Stomach (tissue), 19 donors: ENCODE measurements at regions of chr20 and their contacts with region 1.

Region 1: GRCh38 chr20:9626357-9626756 is 112.0 kb downstream of the LAMP5 start:
- DNase-seq: peak in 1 of 2 donors; percentile 64
- H3K4me3 ChIP-seq: no peak overlapping the region
- H3K27ac ChIP-seq: no peak overlapping the region
- H3K4me1 ChIP-seq: no peaks in the 10 kb centered on the region
- H3K27me3 ChIP-seq: no peaks in the 10 kb centered on the region
- CTCF ChIP-seq: no peak
- EP300 ChIP-seq: no peak
- POLR2A ChIP-seq: no peak

Region 2: DNA sequence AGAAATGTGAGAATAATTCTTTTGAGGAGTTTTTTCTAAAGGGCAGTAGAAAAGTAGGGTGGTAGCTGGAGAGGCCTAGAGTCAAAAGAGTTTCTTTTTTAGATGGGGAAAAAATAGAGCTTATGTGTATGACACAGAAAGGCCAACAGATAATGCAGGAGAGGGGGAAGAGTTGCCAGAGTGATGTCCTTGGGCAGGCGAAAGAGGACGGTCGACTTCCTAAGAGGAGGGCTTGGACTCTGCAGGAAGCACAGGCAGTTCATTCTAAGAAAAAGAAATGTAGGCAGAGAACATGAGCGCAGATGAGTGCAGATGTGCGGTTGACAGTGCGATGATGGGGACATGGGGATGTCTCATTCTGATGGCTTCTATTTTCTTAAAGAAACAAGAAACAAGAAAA is 143.6 kb after region 1 on chr20:
- intact Hi-C with region 1: no loop called
- DNase-seq: no peak
- H3K4me3 ChIP-seq: no peak overlapping the region
- H3K27ac ChIP-seq: no peak overlapping the region
- H3K4me1 ChIP-seq: no peaks in the 10 kb centered on the region
- H3K27me3 ChIP-seq: no peaks in the 10 kb centered on the region
- CTCF ChIP-seq: no peak
- EP300 ChIP-seq: no peak
- POLR2A ChIP-seq: no peak

Region 3: DNA sequence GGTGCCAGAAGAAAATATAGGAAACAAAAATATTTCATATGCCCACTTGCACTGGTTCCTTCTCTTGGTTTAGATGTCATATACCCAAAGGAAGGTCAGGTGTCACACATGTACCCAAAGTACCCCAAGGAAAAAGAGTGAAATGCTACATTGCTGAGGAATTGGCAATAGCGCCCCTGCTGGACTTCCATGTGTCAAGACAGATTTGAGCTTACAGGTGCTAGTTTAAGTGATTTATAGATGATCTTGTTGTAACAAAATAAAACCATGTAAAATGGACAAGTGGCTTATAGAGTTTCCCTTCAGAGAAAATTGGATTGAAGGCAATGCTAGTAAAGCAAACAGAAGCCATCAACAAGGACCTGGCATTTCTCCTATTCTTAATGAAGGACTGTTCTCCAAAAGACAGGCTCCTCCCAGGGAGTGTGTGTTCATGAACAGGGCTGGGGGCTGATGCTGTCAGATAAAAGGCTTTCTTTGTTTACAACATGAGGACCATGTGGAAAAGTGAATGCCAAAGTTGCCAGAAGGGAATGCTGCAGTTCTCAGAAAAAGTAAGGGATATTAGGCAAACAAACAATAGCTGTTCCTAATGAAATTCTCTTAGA is 276.8 kb after region 1 on chr20:
- intact Hi-C with region 1: loop called (anchors 10 kb)
- DNase-seq: peak in 1 of 2 donors; percentile 41
- H3K4me3 ChIP-seq: no peak overlapping the region
- H3K27ac ChIP-seq: no peak overlapping the region
- H3K4me1 ChIP-seq: no peaks in the 10 kb centered on the region
- H3K27me3 ChIP-seq: no peaks in the 10 kb centered on the region
- CTCF ChIP-seq: no peak
- EP300 ChIP-seq: no peak
- POLR2A ChIP-seq: no peak